ENCODE measurements at regions of chr6 and their contacts with region 1.

Region 1: GRCh38 chr6:298233-299103 is 6.2 kb downstream of the DUSP22 start:
- DNase-seq: no peak
- ATAC-seq: peak; percentile 32
- H3K4me3 ChIP-seq: peak overlapping the region; percentile 63
- H3K27ac ChIP-seq: peak overlapping the region; percentile 100
- H3K4me1 ChIP-seq: peaks cover 66% of the 10 kb centered on the region
- H3K27me3 ChIP-seq: no peaks in the 10 kb centered on the region
- CTCF ChIP-seq: no peak
- EP300 ChIP-seq: no peak
- POLR2A ChIP-seq: no peak
- RAD21 ChIP-seq: no peak

Region 2: DNA sequence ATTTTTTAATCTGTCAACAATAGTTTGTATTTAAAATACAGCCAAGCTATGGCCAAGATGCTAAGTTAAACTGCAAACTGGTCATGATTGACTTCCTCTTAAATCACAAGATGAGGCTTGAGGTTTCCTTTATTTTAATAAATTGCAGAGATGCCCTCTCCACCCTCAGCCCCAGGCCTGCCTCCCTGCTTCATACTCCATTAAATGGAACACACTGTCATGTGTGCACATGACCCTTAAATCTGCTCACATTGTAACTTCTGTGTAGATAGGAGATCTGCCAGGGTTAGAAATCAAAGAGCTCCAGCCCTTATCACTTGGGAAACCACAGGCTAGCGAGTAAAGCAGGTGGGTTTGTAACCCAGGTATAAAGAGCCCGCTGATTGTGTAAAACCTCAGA is 14.6 kb after region 1 on chr6:
- CTCF ChIA-PET with region 1: interaction called, 56 read pairs
- POLR2A ChIA-PET with region 1: interaction called, 67 read pairs
- RAD21 ChIA-PET with region 1: interaction called, 112 read pairs
- SMC1A ChIA-PET with region 1: interaction called, 221 read pairs
- in situ Hi-C with region 1: no loop called
- intact Hi-C with region 1: no loop called
- DNase-seq: no peak
- ATAC-seq: peak; percentile 1; the same call in 1 of the 3 replicates
- H3K4me3 ChIP-seq: no peak overlapping the region
- H3K27ac ChIP-seq: peak overlapping the region; percentile 65
- H3K4me1 ChIP-seq: peaks cover 93% of the 10 kb centered on the region
- H3K27me3 ChIP-seq: no peaks in the 10 kb centered on the region
- CTCF ChIP-seq: no peak
- EP300 ChIP-seq: no peak
- POLR2A ChIP-seq: no peak
- RAD21 ChIP-seq: no peak

Region 3: GRCh38 chr6:733431-734219 is 435.2 kb after region 1 on chr6:
- CTCF ChIA-PET with region 1: no interaction called
- POLR2A ChIA-PET with region 1: no interaction called
- RAD21 ChIA-PET with region 1: no interaction called
- SMC1A ChIA-PET with region 1: no interaction called
- in situ Hi-C with region 1: no loop called
- intact Hi-C with region 1: no loop called
- DNase-seq: no peak
- ATAC-seq: no peak
- H3K4me3 ChIP-seq: no peak overlapping the region
- H3K27ac ChIP-seq: no peak overlapping the region
- H3K4me1 ChIP-seq: no peaks in the 10 kb centered on the region
- H3K27me3 ChIP-seq: peaks cover 2 to 6% of the 10 kb centered on the region in 2 experiments; a peak in 2 of 4 replicates
- CTCF ChIP-seq: no peak
- EP300 ChIP-seq: no peak
- POLR2A ChIP-seq: no peak
- RAD21 ChIP-seq: no peak

Measured in GM12878 (cell line).